AG04450 (cell line): ENCODE measurements at regions of chr14 and their contacts with region 1.

Region 1: GRCh38 chr14:71855399-71856036 is 76.7 kb upstream of the RGS6 start:
- DNase-seq: peak; percentile 49
- H3K4me3 ChIP-seq: no peak overlapping the region
- H3K27ac ChIP-seq: no peak overlapping the region
- H3K27me3 ChIP-seq: no peaks in the 10 kb centered on the region
- CTCF ChIP-seq: peak; percentile 86

Region 2: GRCh38 chr14:71103662-71104484 is 751.6 kb before region 1 on chr14:
- CTCF ChIA-PET with region 1: interaction called, 38 read pairs
- POLR2A ChIA-PET with region 1: no interaction called
- DNase-seq: peak; percentile 42
- H3K4me3 ChIP-seq: no peak overlapping the region
- H3K27ac ChIP-seq: no peak overlapping the region
- H3K27me3 ChIP-seq: no peaks in the 10 kb centered on the region
- CTCF ChIP-seq: peak; percentile 88

Region 3: DNA sequence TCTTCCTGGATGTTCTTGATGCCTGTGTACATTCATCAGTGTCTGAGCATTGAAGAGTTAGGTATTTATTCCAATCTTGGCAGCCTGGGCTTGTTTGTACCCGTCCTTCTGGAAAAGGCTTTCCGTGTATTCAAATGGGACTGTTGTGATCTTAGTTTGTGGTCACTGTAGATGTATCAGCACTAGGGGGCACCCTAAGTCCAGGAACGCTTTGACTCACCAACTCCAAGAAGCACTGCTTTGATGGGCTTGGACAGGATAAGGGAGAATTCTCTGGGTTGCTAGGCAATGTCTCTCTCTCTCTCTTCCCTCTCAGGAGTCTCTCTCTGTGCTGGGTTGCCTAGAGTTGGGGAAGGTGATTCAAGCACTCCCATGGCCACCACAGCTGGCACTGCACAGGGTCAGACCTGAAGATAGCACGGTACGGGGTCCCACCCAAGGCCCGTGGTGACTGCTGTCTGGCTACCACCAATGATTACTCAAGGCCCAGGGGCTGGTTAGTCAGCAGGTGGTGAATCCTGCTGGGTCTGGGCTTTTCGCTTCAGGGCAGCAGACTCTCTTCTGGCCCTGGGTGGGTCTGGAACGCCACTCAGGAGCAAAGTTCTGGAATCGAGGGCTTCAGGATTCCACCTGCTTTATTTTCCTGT is 134.4 kb before region 1 on chr14:
- CTCF ChIA-PET with region 1: interaction called, 66 read pairs
- POLR2A ChIA-PET with region 1: no interaction called
- DNase-seq: no peak
- H3K4me3 ChIP-seq: no peak overlapping the region
- H3K27ac ChIP-seq: no peak overlapping the region
- H3K27me3 ChIP-seq: no peaks in the 10 kb centered on the region
- CTCF ChIP-seq: peak; percentile 78

Region 4: DNA sequence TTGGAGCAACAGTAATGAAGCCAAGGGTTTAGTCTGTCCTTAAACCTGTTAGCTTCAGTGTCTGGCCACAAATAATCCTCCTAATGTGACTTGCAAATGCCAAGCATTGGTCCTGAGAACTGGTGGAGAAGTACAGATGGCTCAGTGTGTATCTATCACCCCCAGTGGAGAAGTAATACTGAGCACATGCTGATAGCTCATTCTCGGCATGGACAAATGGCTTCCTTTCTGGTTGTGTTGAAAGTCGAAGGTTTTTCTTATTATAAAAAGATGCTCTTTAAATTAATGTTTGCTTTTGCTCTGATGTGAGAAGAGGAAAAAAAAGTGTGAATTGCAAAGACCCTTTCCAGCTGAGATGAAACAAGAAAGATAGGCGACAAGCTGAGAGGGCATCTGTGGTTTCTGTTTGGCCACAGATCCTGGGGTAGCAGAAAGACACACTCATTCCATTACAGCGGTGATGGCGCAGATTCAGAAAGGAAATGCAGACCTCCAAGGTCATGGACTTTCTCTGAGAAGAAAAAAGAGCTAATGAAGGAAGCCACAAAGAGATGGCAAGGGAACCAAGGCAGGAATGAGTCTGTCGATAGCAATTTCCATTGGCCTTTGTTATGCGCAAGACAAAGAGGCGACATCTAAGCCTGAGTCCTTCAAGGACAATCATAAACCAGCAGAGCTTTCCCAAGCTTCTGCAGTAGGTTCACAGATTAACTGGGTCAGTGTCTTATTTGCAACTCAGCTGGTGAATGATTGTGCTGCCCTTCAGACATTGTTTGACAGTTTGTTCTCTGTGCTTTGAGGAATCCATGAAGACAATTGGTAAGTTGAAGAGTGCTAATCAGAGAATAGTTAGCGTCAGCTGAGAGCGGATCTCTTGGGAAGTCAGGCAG is 78.8 kb before region 1 on chr14:
- CTCF ChIA-PET with region 1: interaction called, 10 read pairs
- POLR2A ChIA-PET with region 1: no interaction called
- DNase-seq: no peak
- H3K4me3 ChIP-seq: no peak overlapping the region
- H3K27ac ChIP-seq: no peak overlapping the region
- H3K27me3 ChIP-seq: no peaks in the 10 kb centered on the region
- CTCF ChIP-seq: peak; percentile 25; the same call in 1 of the 2 replicates

Region 5: DNA sequence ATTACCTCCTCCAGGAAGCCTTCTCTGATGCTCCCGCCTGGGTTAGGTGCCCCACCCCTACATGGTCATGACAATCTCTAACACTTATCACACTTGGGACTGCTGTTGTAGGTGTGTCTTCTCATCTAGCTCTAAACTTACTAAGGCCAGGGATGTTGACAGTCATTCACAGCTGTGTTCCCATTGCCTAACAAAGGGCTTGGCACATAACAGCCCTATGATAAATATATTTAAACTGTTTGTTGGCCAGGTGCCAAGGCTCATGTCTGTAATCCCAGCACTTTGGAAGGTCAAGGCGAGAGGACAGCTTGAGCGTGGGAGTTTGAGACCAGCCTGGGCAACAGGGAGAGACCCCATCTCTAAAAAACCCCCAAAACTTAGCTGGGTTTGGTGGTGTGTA is 22.0 kb before region 1 on chr14:
- CTCF ChIA-PET with region 1: interaction called, 10 read pairs
- POLR2A ChIA-PET with region 1: no interaction called
- DNase-seq: no peak
- H3K4me3 ChIP-seq: no peak overlapping the region
- H3K27ac ChIP-seq: no peak overlapping the region
- H3K27me3 ChIP-seq: no peaks in the 10 kb centered on the region
- CTCF ChIP-seq: no peak

Region 6: DNA sequence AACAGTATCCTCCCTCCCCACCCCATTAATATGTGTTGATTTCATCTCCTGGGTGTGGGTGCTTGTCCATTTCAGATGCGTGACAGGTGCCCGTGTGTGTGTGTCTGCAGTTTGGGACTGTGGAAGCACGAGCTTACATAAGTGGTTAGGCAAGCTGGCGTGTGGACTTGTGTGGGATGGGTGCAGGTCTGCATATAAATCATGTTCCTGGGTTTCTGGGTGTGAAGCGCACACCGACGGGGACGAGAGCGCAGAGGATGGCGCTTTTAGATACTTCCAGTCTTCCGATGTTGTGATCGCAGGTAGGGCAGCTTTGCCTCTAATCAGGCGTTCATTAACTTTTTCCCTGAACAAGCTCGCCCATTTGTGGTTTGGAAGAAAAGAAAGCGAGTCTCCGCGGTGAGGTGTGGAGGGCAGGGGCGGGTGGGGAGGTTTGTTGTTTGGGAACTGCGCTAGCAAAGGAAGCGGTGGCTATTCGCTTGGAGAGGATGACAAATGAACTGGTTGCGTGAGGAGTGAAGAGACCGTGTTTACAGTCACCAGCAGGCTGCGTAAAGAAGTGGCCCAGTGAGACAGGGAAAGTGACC is 77.6 kb after region 1 on chr14:
- CTCF ChIA-PET with region 1: no interaction called
- POLR2A ChIA-PET with region 1: no interaction called
- DNase-seq: no peak
- H3K4me3 ChIP-seq: no peak overlapping the region
- H3K27ac ChIP-seq: no peak overlapping the region
- H3K27me3 ChIP-seq: peaks cover 32% of the 10 kb centered on the region
- CTCF ChIP-seq: no peak